AG04449 (cell line): ENCODE measurements at regions of chr12 and their contacts with region 1.

Region 1: DNA sequence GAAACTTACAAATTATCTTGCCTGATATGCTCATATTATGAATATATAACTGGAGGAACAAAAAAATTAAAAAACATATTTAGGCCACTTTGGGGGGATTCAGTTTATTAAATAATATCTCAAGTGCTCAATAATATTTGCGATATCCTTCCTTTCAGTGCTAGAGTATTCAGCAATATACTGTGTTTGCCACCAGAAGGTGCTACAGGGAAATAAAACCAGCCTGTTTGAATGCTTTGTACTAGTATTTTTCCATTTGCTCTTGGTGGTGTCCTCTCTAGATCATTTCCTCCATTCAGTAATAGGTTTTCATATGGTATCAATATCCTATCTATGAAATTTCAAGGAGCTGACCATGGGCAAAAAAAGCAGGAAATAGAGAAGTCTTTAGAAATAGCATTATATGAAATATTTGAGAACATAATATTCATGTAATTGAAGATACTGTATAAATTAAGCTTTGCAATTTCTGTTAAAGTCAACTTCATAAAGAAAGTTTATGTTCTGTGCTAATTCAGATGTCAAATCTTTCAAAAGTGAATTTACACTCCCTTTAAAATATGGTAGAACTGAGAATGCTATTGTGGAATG is 106.2 kb upstream of the NAV3 start:
- DNase-seq: no peak
- H3K4me3 ChIP-seq: no peak overlapping the region
- CTCF ChIP-seq: peak; percentile 61

Region 2: DNA sequence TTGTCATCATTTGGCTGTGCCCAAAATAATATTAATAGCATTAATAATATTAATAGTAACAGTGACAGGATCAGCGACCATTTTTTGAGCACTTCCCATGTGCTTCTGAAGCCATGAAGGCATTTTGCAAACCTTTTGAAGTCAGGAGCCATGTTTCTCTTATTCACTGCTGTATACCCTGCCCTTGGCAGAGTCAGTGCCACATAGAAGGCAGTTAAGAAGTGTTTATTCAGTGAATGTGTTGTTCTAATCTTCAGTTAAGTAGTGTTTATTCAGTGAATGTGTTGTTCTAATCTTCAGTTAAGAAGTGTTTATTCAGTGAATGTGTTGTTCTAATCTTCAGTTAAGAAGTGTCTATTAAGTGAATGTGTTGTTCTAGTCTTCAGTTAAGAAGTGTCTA is 213.5 kb before region 1 on chr12:
- CTCF ChIA-PET with region 1: no interaction called
- POLR2A ChIA-PET with region 1: no interaction called
- DNase-seq: no peak
- H3K4me3 ChIP-seq: no peak overlapping the region
- CTCF ChIP-seq: no peak

Region 3: DNA sequence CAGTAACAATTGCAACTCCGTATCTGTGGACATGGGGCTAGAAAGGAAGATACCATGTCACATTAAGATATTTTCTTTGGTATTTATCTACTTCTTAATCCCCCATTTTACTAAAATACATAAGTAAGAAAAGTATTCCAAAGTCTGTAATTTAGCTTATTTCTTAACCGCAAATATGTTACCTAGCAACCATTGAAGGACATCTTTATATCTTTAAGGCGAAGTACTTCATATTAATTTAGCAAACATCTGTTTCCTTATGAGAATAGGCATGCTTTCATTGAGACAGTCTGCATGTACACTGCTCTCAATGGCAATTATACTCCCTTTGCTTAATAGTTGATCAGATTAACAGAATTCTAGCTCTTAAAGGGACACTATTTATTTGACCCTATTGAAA is 195.0 kb after region 1 on chr12:
- CTCF ChIA-PET with region 1: interaction called, 116 read pairs
- POLR2A ChIA-PET with region 1: no interaction called
- DNase-seq: no peak
- H3K4me3 ChIP-seq: no peak overlapping the region
- CTCF ChIP-seq: no peak